ENCODE measurements at regions of chr12 and their contacts with region 1.

Region 1: GRCh38 chr12:54240971-54241588 is 38.8 kb downstream of the CBX5 start:
- DNase-seq: no peak
- CTCF ChIP-seq: no peak

Region 2: GRCh38 chr12:53074283-53074998 is 1166.6 kb before region 1 on chr12:
- CTCF ChIA-PET with region 1: no interaction called
- POLR2A ChIA-PET with region 1: interaction called, 12 read pairs
- DNase-seq: no peak
- CTCF ChIP-seq: no peak

Region 3: GRCh38 chr12:54259194-54260011 is 18.3 kb after region 1 on chr12:
- CTCF ChIA-PET with region 1: interaction called, 85 read pairs
- POLR2A ChIA-PET with region 1: interaction called, 3 read pairs
- DNase-seq: peak; percentile 82
- CTCF ChIP-seq: no peak

Measured in GM10248 (cell line).